HCT116 (cell line): ENCODE measurements at regions of chr18 and their contacts with region 1.

Region 1: GRCh38 chr18:35386600-35387351 is 9.6 kb upstream of the ZNF396 start:
- DNase-seq: peak; percentile 69
- ATAC-seq: peak; percentile 95
- H3K4me3 ChIP-seq: no peak overlapping the region
- H3K27ac ChIP-seq: no peak overlapping the region
- H3K4me1 ChIP-seq: 0 out of 4 replicates have a peak, but pooled peaks cover 0 to 4% of the 10 kb centered on the region in 2 experiments
- H3K27me3 ChIP-seq: 0 out of 2 replicates have a peak, but pooled peaks cover 6% of the 10 kb centered on the region
- CTCF ChIP-seq: peak; percentile 66 to 87 (median 85)
- POLR2A ChIP-seq: no peak
- RAD21 ChIP-seq: peak; percentile 75

Region 2: GRCh38 chr18:35005963-35006577 is 380.7 kb before region 1 on chr18:
- CTCF ChIA-PET with region 1: interaction called, 4 read pairs
- POLR2A ChIA-PET with region 1: no interaction called
- RAD21 ChIA-PET with region 1: no interaction called
- intact Hi-C with region 1: loop called (anchors 10 kb)
- DNase-seq: peak; percentile 71
- ATAC-seq: peak; percentile 97
- H3K4me3 ChIP-seq: no peak overlapping the region
- H3K27ac ChIP-seq: no peak overlapping the region
- H3K4me1 ChIP-seq: peaks cover 0 to 5% of the 10 kb centered on the region in 2 experiments; a peak in 1 of 4 replicates
- H3K27me3 ChIP-seq: no peaks in the 10 kb centered on the region
- CTCF ChIP-seq: peak; percentile 55 to 73 (median 66)
- POLR2A ChIP-seq: no peak
- RAD21 ChIP-seq: peak; percentile 82

Region 3: GRCh38 chr18:35095983-35096676 is 290.6 kb before region 1 on chr18:
- CTCF ChIA-PET with region 1: no interaction called
- POLR2A ChIA-PET with region 1: no interaction called
- RAD21 ChIA-PET with region 1: no interaction called
- intact Hi-C with region 1: no loop called
- DNase-seq: no peak
- ATAC-seq: no peak
- H3K4me3 ChIP-seq: no peak overlapping the region
- H3K27ac ChIP-seq: no peak overlapping the region
- H3K4me1 ChIP-seq: no peaks in the 10 kb centered on the region
- H3K27me3 ChIP-seq: no peaks in the 10 kb centered on the region
- CTCF ChIP-seq: no peak
- POLR2A ChIP-seq: no peak
- RAD21 ChIP-seq: no peak

Region 4: GRCh38 chr18:35231052-35231451 is 155.7 kb before region 1 on chr18:
- CTCF ChIA-PET with region 1: interaction called, 11 read pairs
- POLR2A ChIA-PET with region 1: no interaction called
- RAD21 ChIA-PET with region 1: no interaction called
- intact Hi-C with region 1: no loop called
- DNase-seq: peak; percentile 82
- ATAC-seq: peak; percentile 94
- H3K4me3 ChIP-seq: peak overlapping the region; percentile 16 to 21; a peak in 2 of 4 replicates
- H3K27ac ChIP-seq: no peak overlapping the region
- H3K4me1 ChIP-seq: no peaks in the 10 kb centered on the region
- H3K27me3 ChIP-seq: no peaks in the 10 kb centered on the region
- CTCF ChIP-seq: peak; percentile 80 to 91 (median 88)
- POLR2A ChIP-seq: no peak
- RAD21 ChIP-seq: peak; percentile 87

Region 5: GRCh38 chr18:35775887-35776286 is 389.1 kb after region 1 on chr18:
- CTCF ChIA-PET with region 1: no interaction called
- POLR2A ChIA-PET with region 1: no interaction called
- RAD21 ChIA-PET with region 1: interaction called in 1 of 2 experiments, 3 read pairs
- intact Hi-C with region 1: loop called (anchors 5 kb)
- DNase-seq: no peak
- ATAC-seq: no peak
- H3K4me3 ChIP-seq: no peak overlapping the region
- H3K27ac ChIP-seq: no peak overlapping the region
- H3K4me1 ChIP-seq: no peaks in the 10 kb centered on the region
- H3K27me3 ChIP-seq: peaks cover 31% of the 10 kb centered on the region
- CTCF ChIP-seq: no peak
- POLR2A ChIP-seq: no peak
- RAD21 ChIP-seq: no peak

Region 6: GRCh38 chr18:35972197-35973052 is 585.6 kb after region 1 on chr18 and contains the start of gene RMP24:
- CTCF ChIA-PET with region 1: no interaction called
- POLR2A ChIA-PET with region 1: no interaction called
- RAD21 ChIA-PET with region 1: no interaction called
- intact Hi-C with region 1: loop called (anchors 5 kb)
- DNase-seq: peak; percentile 94
- ATAC-seq: peak; percentile 94
- H3K4me3 ChIP-seq: peak within 1 kb of the TSS; percentile 83 to 89
- H3K27ac ChIP-seq: peak within 1 kb of the TSS; percentile 76
- H3K4me1 ChIP-seq: peaks cover 0 to 18% of the 10 kb centered on the region in 2 experiments; a peak in 2 of 4 replicates
- H3K27me3 ChIP-seq: no peaks in the 10 kb centered on the region
- CTCF ChIP-seq: no peak
- POLR2A ChIP-seq: peak; percentile 63
- RAD21 ChIP-seq: no peak